Posterior vena cava (tissue), 2 donors: ENCODE measurements at regions of chrX and their contacts with region 1.

Region 1: DNA sequence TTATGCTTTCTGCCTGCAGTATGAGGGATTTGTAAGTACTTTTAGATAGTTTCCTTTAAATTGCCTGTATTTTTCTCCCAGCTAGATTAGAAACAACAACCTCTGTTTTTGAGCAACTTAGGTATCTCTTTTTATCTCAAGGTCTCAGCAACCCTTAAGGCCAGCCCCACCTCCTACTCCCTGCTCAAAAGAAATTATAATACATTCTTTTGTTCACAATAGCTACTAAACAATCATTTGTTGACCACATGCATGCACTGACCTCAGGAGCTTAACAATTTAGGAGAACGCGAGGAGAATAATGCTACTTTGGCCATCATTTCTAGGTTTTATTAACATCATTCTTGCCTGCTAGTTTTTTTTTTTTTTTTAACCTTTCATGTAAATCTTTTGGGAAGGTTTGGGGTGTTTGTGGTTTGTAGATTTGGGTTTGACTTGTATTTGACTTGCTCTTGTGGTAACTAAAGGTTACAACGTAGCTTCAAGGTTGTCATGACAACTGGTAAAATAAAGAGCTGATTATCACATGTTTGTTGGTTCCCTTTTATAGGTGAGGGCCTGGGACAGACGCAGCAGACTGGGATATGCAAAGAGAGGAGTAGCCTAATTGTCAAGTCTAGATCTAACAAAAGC is 145.4 kb upstream of the PLAC1 start:
- DNase-seq: no peak

Region 2: DNA sequence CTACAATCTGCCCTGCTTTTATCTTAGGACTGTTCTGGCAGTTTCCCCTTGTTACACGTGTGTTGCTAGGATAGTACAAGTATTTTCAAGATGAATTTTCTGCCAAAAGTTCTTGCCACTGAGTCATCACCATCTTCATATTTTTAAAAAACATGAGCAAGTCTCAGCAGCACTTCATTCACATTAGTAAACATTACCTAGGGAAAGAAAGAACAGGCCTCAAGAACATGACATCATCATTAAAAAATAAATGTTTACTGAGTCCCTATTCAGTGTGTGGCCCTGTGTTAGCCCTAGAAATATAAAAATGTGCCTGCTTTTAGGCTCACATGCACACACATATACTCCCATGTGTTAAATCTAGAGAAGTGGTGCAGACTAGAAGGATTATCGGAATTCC is 799.6 kb before region 1 on chrX:
- intact Hi-C with region 1: loop called in 1 of 2 experiments (anchors 5 kb)
- DNase-seq: no peak

Region 3: GRCh38 chrX:134167591-134168203 is 636.0 kb before region 1 on chrX:
- intact Hi-C with region 1: loop called in 1 of 2 experiments (anchors 5 kb)
- DNase-seq: no peak

Region 4: DNA sequence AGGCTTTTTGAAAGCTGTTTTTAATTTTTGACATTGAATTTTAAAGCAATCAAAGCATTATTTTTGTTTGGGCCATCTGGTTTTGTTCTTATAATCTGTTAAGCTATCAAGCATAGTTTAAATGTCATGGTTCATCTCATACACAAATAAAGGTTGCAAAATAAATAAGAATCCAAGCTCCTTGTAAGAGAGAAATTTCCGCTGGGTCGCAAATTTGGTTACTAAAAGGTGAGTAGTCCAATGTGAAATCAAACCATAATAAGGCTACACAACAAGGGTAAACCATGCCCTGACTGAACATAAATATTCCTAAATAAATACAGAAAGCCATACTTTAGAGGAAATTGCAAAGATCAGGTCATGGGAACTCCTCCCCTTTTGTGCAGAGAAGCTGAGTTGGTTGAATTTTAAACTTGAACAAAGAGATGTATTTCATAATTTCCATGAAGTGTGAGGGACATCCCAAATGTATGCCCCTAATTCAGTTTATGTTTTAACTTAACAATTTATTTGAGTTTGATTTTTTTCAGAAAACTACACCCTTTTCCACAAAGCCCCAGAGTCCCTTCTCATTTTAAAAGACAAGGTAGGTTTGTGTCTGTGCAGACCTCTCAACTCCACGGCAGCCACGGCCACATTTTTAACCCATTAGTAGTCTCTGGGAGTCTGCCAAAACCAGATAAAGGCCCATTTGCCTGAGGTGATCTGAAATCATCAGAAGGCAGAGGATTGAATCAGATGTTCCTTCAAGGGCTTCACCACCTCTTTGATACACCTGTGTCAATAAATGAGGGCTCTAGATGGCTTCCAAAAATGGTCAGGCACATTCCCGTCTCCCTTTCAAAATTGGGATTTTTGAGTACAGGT is 230.6 kb before region 1 on chrX:
- intact Hi-C with region 1: no loop called
- DNase-seq: no peak

Region 5: GRCh38 chrX:134603806-134604700 is 199.6 kb before region 1 on chrX:
- intact Hi-C with region 1: no loop called
- DNase-seq: no peak